ENCODE measurements at regions of chr3 and their contacts with region 1.

Region 1: DNA sequence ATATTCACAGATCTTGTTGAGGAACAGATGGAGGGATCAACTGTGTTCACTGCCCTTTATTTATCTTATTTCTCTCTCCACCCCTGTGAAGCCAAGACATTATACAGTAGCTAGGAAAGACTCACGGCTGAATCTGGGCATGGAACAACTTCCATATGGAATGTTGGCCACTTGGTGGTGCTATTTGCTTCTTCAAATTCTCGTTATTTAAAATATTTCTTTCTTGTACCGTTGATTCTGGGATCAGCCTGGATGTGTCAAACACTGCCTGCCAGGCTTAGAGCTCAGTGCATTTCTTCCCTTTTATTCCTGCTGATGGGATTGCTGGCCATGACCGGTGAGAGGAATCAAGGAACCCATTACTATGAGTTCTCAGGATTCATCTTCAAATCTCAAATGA is 17.5 kb upstream of the GASK1A start:
- DNase-seq: no peak
- H3K4me3 ChIP-seq: no peak overlapping the region
- H3K27me3 ChIP-seq: no peaks in the 10 kb centered on the region
- CTCF ChIP-seq: peak; percentile 65

Region 2: DNA sequence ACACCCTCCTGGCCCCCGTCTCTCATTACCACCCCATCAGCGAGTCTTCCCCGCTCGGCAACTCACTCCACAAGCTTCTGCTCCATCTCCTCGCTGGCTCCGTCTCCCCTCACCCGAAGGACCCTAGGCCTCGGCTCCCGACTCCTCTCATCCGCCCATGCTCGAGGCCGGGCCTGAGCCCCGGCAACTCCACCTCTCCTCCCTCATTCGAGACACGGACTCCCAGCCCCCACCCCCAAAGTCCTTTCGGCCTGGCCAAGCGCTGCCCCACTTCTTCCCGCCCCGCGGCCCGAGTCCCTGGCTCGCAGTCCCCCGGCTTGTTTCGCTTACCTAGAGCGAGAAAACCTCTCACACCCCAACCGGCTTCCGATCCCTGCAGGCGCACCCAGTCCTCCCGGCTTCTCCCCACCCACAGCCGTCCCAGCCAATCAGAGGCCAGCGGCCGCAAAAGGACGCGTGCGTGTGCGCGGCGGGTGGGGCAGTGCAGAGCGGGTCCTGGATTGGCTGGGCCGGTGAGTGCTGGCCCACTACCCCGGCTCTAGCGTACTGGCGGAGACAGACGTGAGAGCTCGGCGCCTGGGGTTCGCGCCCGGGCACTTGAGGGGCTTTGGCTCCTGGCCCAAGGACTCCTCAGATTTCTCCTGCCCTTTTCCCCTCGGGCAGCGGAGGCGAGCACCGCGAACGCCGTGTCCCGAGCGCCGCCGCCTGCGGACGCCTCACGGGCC is 157.4 kb before region 1 on chr3 and contains the start of gene HIGD1A:
- CTCF ChIA-PET with region 1: no interaction called
- POLR2A ChIA-PET with region 1: no interaction called
- DNase-seq: peak; percentile 71
- H3K4me3 ChIP-seq: peak within 1 kb of the TSS; percentile 90
- H3K27me3 ChIP-seq: no peaks in the 10 kb centered on the region; the same call in 1 of the 2 replicates
- CTCF ChIP-seq: no peak
- polyA plus RNA-seq, gene HIGD1A: 51.1 and 144 TPM in 2 replicates

Region 3: DNA sequence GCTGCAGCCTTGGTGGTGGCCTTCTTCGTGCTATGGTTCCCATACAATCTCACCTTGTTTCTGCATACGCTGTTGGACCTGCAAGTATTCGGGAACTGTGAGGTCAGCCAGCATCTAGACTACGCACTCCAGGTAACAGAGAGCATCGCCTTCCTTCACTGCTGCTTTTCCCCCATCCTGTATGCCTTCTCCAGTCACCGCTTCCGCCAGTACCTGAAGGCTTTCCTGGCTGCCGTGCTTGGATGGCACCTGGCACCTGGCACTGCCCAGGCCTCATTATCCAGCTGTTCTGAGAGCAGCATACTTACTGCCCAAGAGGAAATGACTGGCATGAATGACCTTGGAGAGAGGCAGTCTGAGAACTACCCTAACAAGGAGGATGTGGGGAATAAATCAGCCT is 96.4 kb before region 1 on chr3:
- CTCF ChIA-PET with region 1: no interaction called
- POLR2A ChIA-PET with region 1: no interaction called
- DNase-seq: no peak
- H3K4me3 ChIP-seq: no peak overlapping the region
- H3K27me3 ChIP-seq: 0 out of 2 replicates have a peak, but pooled peaks cover 2% of the 10 kb centered on the region
- CTCF ChIP-seq: no peak

Region 4: DNA sequence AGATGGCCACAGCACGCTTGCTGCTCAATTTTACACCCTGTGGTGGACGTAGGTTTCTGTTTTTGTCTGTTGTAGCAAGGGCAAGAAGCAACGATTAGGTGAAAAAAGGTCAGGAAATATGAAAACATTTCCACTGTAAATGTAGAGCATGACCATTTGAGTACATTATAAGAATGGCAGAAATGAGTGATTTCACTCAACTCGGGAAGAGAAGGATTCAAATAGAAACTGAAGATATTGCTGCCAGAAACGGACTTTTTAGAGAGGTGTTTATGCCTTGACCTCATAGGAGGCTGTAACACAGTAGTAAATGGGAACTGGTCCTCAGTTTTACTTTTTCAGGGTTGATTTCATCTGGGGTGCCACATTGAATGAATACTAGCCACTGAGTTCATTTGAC is 15.6 kb before region 1 on chr3:
- CTCF ChIA-PET with region 1: interaction called, 10 read pairs
- POLR2A ChIA-PET with region 1: no interaction called
- DNase-seq: no peak
- H3K4me3 ChIP-seq: no peak overlapping the region
- H3K27me3 ChIP-seq: no peaks in the 10 kb centered on the region
- CTCF ChIP-seq: no peak

Region 5: GRCh38 chr3:43087249-43087776 is 125.7 kb after region 1 on chr3:
- CTCF ChIA-PET with region 1: interaction called, 15 read pairs
- POLR2A ChIA-PET with region 1: no interaction called
- DNase-seq: no peak
- H3K4me3 ChIP-seq: no peak overlapping the region
- H3K27me3 ChIP-seq: no peaks in the 10 kb centered on the region
- CTCF ChIP-seq: no peak

Region 6: GRCh38 chr3:43148033-43148432 is 186.4 kb after region 1 on chr3:
- CTCF ChIA-PET with region 1: interaction called, 97 read pairs
- POLR2A ChIA-PET with region 1: no interaction called
- DNase-seq: no peak
- H3K4me3 ChIP-seq: no peak overlapping the region
- H3K27me3 ChIP-seq: peaks cover 4% of the 10 kb centered on the region
- CTCF ChIP-seq: no peak

Region 7: DNA sequence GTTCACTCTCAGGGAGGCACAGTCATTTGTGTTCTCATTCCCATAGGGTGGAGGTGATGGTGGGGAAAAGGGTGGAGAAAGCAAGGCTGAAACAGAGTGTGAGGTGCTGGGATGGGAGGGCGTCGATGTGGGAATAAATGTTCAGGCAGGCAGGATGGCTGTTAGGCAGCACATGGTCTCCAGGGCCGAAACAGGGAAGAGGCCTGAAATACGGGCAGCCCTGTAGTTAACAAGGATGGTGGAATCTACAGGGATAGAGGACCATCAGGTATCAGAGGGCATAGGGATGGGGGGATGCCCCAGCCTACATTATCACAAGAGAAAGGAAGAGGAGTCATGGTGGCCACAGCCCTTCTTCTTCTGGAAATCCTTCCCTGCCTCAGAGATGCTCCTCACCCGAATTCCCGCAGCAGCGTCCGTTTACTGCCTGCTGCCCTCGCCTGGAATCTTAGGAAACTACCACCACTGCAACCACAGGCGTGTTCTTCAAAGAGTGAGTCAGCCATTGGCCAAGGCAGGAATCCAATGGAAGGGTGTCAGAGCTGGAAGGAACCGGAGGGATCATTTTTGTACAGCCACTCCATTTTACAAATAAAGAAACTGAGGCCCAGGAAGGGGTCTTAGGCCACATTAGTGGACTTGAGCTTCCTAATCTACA is 194.0 kb after region 1 on chr3:
- CTCF ChIA-PET with region 1: interaction called, 97 read pairs
- POLR2A ChIA-PET with region 1: no interaction called
- DNase-seq: peak; percentile 28
- H3K4me3 ChIP-seq: no peak overlapping the region
- H3K27me3 ChIP-seq: peaks cover 5% of the 10 kb centered on the region
- CTCF ChIP-seq: peak; percentile 76

Region 8: DNA sequence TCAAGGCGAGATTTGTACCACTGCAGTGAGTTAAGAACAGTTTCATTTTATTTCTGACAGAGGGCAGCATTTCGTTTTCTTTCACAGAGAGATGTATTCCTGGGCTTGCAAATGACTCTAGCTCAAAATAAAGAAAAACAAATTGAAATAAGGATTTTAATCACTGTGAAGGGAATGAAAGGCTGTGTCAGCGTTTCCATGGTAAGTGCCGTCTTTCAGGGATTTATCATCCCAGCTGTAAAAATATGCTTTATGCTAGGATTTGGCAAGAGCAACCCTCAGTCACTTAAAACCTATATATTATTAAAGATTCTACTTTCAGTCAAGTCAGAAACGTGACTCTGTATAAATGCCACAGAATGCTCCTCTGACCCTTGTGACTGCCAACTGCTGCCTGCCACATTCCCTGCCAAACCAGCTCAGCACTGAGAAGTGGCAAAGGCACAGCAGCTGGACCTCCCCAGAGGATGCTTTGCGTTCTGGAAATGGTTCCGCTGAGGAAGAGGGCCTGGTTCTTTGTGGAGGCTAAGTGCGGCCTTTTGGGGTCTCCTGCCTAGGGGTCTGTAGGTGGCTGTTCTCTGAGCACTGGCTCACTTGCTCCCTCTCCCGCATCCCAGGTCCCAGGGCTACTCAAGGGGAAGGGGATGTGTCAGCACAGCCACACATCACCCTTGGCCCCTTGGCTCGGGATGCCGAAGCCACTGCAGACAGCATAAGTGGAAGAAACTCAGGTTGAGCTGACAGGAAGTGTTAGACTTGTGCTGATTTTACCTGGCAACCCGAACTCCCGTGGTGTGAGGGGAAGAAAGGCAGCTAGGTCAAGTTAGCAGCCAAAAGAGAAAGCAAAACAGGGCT is 200.8 kb after region 1 on chr3:
- CTCF ChIA-PET with region 1: interaction called, 97 read pairs
- POLR2A ChIA-PET with region 1: no interaction called
- DNase-seq: peak; percentile 23
- H3K4me3 ChIP-seq: no peak overlapping the region
- H3K27me3 ChIP-seq: peaks cover 3% of the 10 kb centered on the region; the same call in 1 of the 2 replicates
- CTCF ChIP-seq: peak; percentile 52

Region 9: GRCh38 chr3:44264146-44264545 is 1302.5 kb after region 1 on chr3:
- CTCF ChIA-PET with region 1: no interaction called
- POLR2A ChIA-PET with region 1: no interaction called
- DNase-seq: no peak
- H3K4me3 ChIP-seq: no peak overlapping the region
- H3K27me3 ChIP-seq: no peaks in the 10 kb centered on the region
- CTCF ChIP-seq: no peak

Measured in BJ (cell line).